ENCODE measurements at regions of chr1 and their contacts with region 1.

Region 1: DNA sequence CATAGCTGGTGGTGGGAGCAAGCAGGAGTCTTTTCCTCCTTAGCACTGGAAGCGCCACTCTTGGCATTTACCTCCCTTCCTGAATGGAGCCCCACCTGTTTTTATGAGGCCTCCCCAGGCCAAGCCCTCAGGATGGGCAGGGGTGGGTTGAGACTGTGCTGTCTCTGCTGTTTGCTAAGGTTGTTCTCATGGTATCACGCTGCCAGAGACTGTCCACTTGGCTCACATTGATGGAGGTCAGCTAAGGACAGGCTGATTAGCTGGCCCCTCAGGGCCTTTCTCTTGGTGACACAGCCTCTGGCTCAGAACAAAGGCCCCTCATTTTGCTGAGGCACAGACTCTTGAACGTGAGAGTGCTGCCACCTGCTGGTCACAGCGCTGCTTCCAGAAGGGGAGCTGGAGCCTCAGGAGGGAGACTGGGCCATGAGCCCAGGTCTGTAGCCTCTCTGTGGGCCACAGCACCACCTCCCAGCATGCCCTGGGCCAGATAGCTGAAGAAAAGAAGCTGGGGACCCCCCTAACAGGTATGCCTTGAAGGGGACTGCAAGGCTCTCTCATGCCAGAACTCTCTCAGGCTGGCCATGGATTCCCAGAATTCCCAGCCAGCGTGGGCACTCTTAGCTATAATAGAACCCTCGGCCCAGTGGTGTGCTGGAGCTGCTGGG is 85.6 kb downstream of the CD58 start:
- DNase-seq: peak; percentile 87
- H3K4me3 Mint-ChIP-seq: no peak overlapping the region
- H3K27ac Mint-ChIP-seq: no peak overlapping the region
- H3K4me1 Mint-ChIP-seq: peaks cover 9% of the 10 kb centered on the region
- H3K27me3 Mint-ChIP-seq: peaks cover 3% of the 10 kb centered on the region

Region 2: GRCh38 chr1:115865704-115866380 is 619.4 kb before region 1 on chr1:
- CTCF ChIA-PET with region 1: no interaction called
- POLR2A ChIA-PET with region 1: no interaction called
- DNase-seq: no peak
- H3K4me3 Mint-ChIP-seq: no peak overlapping the region
- H3K27ac Mint-ChIP-seq: no peak overlapping the region
- H3K4me1 Mint-ChIP-seq: no peaks in the 10 kb centered on the region
- H3K27me3 Mint-ChIP-seq: peaks cover 22% of the 10 kb centered on the region

Region 3: DNA sequence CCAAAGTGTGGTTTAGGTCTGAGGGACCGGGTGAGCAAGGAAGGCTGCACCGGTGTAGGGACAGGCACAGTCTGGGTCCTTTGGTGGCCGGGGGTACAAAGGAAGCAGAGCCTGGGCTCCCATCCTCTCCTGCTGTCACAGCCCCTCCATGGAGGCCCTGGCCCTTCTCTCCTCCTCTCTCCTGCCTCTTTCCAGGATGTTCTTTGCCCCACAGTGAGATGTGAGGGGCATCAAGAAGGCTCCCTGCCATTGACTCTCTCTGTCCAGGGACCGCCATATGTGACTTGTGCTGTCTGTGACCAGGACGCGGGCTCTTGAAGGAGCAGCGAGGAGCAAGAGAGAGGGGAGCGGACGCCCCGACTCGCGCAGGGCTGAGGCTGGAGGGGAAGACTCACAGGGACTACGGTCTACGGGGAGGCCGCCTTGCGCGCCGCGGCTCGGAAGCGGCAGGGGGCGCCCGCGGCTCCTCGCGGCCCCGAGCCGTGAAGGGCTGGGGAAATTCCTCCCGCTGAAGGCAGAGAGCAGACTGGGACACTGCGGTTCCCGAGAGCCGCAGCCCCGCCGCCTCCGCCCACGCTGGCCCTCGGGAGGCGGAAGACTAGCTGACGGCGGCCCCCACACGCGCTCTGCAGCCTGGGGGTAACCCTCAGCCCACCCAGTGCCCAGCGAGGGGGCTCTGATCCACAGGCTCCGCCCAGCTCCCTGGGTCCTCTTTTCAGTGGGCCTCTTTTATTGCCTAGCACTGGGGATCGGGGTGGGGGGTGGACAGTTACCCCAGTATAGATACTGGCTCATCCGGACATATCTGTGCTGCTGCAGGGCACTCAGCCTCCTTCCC is 333.2 kb before region 1 on chr1:
- CTCF ChIA-PET with region 1: interaction called, 41 read pairs
- POLR2A ChIA-PET with region 1: interaction called, 3 read pairs
- DNase-seq: peak; percentile 78
- H3K4me3 Mint-ChIP-seq: peak overlapping the region; percentile 31
- H3K27ac Mint-ChIP-seq: no peak overlapping the region
- H3K4me1 Mint-ChIP-seq: peaks cover 8% of the 10 kb centered on the region
- H3K27me3 Mint-ChIP-seq: peaks cover 23% of the 10 kb centered on the region

Region 4: DNA sequence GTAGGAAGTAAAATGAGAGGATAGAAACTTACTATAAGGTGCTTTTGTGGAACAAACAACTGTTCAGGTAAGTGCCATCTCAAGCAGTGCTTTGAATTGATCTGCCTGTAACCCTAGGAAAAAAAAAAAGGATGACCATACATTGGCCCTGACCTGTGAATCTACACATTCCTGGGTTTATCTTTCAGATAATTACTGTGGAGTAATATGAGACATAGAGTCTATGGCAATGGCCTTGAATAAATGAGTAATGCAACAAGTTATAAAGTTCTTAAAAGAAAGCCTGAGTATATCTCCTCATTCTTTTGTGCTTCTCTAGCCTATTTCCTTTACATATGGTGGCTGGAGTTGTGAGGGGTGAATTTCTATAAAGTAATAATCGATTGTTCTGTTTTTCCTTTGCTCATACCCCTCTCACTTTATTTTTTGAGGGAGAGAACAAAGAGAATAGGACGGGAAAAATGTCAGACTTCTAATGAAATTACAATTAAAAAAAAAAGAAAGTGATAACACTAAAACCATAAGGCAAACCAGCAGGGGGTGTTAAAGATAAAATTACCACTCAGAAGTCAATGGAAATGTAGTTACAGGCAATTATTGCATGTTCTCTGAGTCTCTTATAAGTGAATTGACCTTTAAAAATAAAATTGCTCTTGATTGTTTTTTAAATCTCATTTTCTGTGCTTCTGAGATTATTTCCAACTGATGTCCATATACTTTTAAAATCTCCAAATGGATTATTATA is 124.6 kb before region 1 on chr1:
- CTCF ChIA-PET with region 1: interaction called, 17 read pairs
- POLR2A ChIA-PET with region 1: no interaction called
- DNase-seq: no peak
- H3K4me3 Mint-ChIP-seq: no peak overlapping the region
- H3K27ac Mint-ChIP-seq: no peak overlapping the region
- H3K4me1 Mint-ChIP-seq: peaks cover 7% of the 10 kb centered on the region
- H3K27me3 Mint-ChIP-seq: peaks cover 4% of the 10 kb centered on the region

Region 5: GRCh38 chr1:116474921-116475849 is 10.0 kb before region 1 on chr1:
- CTCF ChIA-PET with region 1: interaction called, 19 read pairs
- POLR2A ChIA-PET with region 1: interaction called, 3 read pairs
- DNase-seq: no peak
- H3K4me3 Mint-ChIP-seq: no peak overlapping the region
- H3K27ac Mint-ChIP-seq: no peak overlapping the region
- H3K4me1 Mint-ChIP-seq: peaks cover 2% of the 10 kb centered on the region
- H3K27me3 Mint-ChIP-seq: no peaks in the 10 kb centered on the region

Region 6: DNA sequence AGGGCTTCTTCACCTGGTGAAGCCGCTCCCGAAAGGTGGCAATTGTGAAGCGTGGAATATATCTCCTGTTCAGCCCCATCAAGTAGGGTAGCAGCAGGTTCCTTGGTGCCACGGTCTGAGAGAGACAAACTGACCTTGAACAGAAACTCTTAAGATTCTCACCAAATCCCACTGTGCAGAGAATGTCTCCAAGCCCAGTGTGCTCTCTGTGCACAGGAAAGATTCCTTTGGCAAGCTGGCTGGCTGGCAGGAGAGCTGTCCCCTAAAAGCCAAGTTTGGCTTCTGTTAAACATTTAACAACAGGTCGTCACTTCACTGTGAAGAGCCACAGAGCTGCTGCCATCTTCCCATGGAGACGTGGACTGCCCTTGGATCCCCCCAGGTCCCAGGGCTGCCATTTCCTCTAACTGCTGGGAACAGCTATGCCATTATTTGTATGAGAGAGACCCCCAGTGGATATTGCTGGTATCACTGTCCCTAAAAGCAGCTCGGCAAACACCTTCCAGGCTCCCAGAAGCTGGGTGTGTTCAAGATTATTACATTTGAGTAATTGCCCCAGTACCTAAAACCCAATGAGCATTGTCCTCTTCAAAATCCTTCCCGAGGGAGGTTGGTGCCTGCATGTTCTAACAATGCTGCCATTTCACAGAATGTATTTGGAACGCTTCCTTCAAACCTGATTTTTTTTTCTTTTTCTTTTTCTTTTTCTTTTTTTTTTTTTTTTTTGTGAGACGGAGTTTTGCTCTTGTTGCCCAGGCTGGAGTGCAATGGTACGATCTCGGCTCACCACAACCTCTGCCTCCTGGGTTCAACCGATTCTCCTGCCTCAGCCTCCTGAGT is 13.8 kb after region 1 on chr1:
- CTCF ChIA-PET with region 1: interaction called, 129 read pairs
- POLR2A ChIA-PET with region 1: interaction called, 7 read pairs
- DNase-seq: peak; percentile 54
- H3K4me3 Mint-ChIP-seq: no peak overlapping the region
- H3K27ac Mint-ChIP-seq: peak overlapping the region; percentile 53
- H3K4me1 Mint-ChIP-seq: peaks cover 64% of the 10 kb centered on the region
- H3K27me3 Mint-ChIP-seq: no peaks in the 10 kb centered on the region

Measured in activated CD4-positive, alpha-beta memory T cell treated with anti-CD3 and anti-CD28 coated beads, Interleukin-2, amount 10 ng/mL, durations not matched to agents 7 days and 5 days (primary cell).